Common myeloid progenitor, CD34-positive (primary cell): ENCODE measurements at regions of chr11 and their contacts with region 1.

Region 1: DNA sequence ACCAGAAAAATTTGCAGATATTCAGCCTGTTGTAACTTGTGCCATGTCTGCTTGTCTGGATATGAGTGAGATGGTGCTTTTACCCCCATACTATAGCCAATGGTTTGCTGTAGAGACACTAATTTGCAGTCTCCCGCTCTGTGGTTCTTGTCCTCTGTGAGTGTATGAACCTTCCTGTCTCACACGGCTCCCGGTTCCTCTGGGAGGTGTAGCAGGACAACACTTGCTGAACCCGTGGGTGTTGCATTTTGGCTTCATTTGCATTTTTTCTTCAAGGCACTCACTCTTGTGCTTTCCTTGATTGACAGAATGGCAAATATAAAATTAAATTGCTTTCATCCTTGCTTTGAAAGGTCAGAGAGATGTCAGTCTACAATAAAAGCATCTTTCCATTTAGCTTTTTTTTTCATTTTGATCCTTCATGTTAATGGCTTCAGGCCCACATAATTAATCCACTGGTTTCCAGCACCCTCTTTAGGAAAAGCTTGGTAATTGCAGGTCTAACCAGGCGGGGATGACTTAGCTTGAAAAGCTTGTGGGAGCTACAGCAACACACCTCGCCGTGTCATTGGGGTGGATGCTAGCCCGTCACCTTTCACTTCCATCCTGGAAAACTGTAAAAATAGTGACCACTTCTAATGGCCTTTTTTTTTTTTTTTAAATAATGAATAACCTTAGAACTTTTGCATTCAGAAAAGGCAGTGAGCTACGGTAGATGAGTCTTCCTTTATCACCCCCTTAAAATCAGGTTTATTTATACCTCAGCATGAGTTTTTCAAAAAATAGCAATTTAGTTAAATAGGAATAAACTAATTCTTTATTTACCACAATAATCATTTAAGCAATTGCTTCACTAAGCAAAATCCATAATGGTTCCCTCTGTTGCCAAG is 27.4 kb upstream of the ST14 start:
- DNase-seq: peak; percentile 75 to 87 (median 83)
- H3K4me3 ChIP-seq: no peak overlapping the region
- H3K27ac ChIP-seq: no peak overlapping the region
- H3K4me1 ChIP-seq: no peaks in the 10 kb centered on the region
- H3K27me3 ChIP-seq: no peaks in the 10 kb centered on the region

Region 2: DNA sequence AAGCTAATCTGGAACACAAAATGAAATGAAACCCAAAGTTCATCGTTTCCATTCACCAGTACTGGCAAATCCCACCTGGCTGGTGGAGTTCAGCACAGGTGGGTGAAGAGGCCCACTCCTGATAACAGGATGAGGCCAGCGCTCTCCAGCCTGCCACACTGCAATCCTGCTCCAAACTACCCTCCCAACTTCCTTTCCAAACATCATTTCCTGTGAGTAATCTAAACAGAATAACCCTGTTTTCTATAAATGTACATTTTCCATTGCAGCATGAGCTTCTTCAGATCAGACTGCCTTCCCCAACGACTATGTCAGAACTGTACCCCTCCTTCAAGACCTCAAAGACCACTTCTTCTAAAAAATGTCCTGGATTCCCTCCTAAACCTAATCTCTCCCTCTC is 220.9 kb before region 1 on chr11:
- CTCF ChIA-PET with region 1: interaction called, 10 read pairs
- POLR2A ChIA-PET with region 1: no interaction called
- DNase-seq: no peak
- H3K4me3 ChIP-seq: no peak overlapping the region
- H3K27ac ChIP-seq: peak overlapping the region in 1 of 2 experiments; percentile 36
- H3K4me1 ChIP-seq: peaks cover 0 to 9% (median 3%) of the 10 kb centered on the region in 4 experiments
- H3K27me3 ChIP-seq: no peaks in the 10 kb centered on the region

Region 3: DNA sequence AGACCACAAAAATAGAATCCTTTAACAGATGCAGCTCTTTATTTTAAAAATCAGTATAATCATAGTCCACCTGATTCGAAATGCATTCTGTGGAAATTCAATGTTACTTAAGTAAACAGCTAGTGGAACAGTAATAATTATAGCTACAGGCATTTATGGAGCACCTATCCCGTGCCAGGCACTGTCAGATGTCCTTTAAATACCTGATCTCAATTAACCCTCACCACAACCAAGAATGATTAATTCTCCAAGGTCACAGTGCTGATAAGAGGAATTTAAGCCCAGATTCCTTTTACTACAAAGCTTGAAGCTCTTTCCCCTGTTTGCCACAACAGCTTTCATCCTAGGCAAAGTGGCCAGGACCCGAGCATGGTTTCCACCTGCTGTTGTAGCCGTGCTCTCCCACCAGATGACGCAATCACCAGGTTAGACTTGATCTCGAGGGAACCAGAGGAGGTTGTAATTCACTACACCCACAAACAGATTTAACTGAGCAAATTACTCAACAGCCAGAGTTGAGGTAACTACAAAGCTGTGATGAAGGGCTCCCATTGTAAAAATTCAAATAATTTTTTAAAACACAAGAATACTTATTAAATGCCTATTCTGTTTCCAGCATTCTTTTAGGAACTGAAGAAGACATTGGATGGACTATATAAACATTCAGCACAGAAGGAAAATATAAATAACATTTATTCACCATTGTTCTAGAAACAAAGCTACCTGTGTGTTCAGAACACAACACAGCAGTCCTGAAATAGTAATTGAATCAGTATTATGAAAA is 139.9 kb before region 1 on chr11:
- CTCF ChIA-PET with region 1: interaction called, 105 read pairs
- POLR2A ChIA-PET with region 1: no interaction called
- DNase-seq: peak; percentile 71 to 89 (median 87)
- H3K4me3 ChIP-seq: no peak overlapping the region
- H3K27ac ChIP-seq: no peak overlapping the region
- H3K4me1 ChIP-seq: peaks cover 0 to 16% (median 7%) of the 10 kb centered on the region in 4 experiments
- H3K27me3 ChIP-seq: no peaks in the 10 kb centered on the region

Region 4: GRCh38 chr11:130118636-130119387 is 13.4 kb before region 1 on chr11:
- CTCF ChIA-PET with region 1: interaction called, 71 read pairs
- POLR2A ChIA-PET with region 1: no interaction called
- DNase-seq: peak in 2 of 3 donors; percentile 53 to 67
- H3K4me3 ChIP-seq: no peak overlapping the region
- H3K27ac ChIP-seq: no peak overlapping the region
- H3K4me1 ChIP-seq: peaks cover 25 to 39% (median 25%) of the 10 kb centered on the region in 4 experiments
- H3K27me3 ChIP-seq: no peaks in the 10 kb centered on the region

Region 5: DNA sequence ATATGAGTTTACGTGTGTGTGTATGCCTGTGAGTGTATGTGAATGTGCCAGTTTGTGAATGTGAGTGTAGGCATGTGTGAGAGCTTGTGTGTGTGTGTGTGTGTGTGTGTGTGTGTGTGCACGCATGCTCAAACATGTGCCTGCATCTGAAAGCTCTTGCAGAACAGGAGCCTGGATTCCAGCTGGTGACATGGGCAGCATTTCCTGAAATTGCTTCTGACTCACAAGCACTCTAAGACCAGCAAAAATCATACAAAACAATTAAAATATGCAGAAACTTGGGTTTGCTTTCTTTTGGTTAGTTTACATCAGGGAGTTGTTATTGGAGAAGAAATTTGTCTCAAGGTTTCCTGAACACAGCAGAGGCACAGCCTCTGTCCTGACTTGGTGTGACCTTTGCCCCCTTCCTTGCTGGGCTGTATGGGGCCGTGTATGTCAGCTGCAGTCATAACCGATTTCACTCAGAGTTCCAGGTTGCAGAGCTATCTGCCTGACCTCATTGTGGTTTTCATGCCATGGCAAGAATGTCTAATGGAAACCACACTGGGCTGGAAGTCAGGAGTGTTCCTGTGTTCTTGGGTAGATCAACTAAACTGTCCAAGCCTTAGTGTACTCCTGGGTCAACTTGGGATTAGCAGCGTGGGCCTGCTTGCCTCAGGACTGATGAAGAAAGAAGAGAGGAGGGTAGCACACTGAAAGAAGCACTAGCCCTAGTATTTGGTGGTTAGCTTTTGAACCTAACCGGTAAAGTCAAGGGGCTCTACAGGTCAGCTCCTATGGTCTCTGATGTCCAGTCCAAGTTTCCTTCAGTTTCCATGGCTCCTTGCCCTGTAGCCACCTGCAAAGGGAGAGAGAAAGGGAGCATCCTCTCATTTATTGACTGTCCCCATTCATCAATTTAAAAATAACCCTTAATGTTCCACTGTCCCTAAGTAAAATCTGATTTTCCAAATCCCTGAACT is 640.3 kb after region 1 on chr11:
- CTCF ChIA-PET with region 1: no interaction called
- POLR2A ChIA-PET with region 1: no interaction called
- DNase-seq: peak in 2 of 3 donors; percentile 21 to 37
- H3K4me3 ChIP-seq: no peak overlapping the region
- H3K27ac ChIP-seq: no peak overlapping the region
- H3K4me1 ChIP-seq: peaks cover 0 to 13% (median 0%) of the 10 kb centered on the region in 4 experiments
- H3K27me3 ChIP-seq: no peaks in the 10 kb centered on the region